IMR-90 (cell line): ENCODE measurements at regions of chr15 and their contacts with region 1.

Region 1: DNA sequence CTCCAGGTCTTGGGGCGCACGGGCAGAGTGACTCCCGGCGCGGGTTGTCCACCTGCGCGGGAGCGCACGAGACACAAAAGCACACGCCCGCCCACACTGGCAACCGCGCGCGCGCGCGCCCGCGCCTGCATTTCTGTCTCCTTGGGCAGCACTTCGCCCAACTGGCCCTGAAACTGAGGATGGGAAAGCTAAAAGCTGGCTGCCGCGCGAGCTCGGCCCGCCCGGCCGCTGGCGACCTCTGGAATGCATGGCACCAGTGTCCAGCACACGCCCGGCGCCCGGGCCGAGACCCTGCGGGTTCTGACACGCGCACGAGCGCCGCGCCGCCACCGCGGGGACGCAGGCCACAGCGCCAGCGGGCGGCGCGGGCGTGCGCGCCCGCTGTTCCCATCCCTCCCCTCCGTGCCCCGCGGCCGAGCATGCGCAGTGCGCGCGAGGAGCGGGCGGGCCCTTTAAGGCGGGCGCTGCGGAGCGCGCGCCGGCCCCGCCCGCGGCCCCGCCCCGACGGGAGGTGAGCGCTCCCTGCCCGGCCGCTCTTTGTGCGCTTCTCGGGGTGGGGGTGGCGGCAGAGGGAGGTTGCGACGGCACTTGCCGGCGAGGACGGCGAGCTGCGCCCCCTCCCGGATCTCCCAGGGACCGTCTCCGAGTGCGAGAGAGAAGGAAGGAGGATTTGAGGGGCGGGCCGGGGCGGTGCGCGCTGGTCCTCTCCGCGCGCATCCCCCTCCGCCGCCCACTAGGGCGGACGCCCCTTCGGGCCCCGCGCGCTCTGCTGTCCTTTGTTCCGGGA is 1.0 kb upstream of the MEX3B start:
- DNase-seq: peak; percentile 92
- ATAC-seq: peak; percentile 69
- H3K4me3 ChIP-seq: peak overlapping the region; percentile 56
- H3K27ac ChIP-seq: peak overlapping the region; percentile 82
- H3K4me1 ChIP-seq: peaks cover 4% of the 10 kb centered on the region; the same call in 1 of the 2 replicates
- H3K27me3 ChIP-seq: no peaks in the 10 kb centered on the region
- CTCF ChIP-seq: peak; percentile 85
- POLR2A ChIP-seq: peak; percentile 67
- RAD21 ChIP-seq: peak; percentile 77

Region 2: DNA sequence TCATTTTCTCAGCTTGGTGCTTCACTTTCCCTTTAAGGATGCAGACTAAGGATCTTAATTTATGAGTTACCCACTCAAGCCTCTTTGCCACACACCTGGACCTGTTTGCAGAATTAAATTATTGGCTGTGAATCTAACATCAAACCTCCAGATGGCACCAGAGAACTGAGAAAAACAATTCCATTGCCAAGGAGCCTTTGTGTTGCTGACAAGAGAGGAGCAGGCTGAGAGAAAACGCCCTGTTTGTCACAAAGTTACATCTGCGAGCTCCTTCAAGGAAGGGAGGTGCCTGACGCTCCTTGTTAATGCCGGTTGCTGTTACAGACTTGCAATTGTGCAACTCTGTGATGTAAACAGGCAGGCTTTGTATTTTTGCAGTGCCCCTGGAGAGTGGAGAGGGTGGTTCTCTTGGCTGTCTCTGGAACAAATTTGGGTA is 636.5 kb before region 1 on chr15:
- CTCF ChIA-PET with region 1: no interaction called
- POLR2A ChIA-PET with region 1: no interaction called
- dilution Hi-C with region 1: no loop called
- in situ Hi-C with region 1: no loop called
- intact Hi-C with region 1: loop called (anchors 2 kb)
- DNase-seq: peak; percentile 74
- ATAC-seq: peak; percentile 80
- H3K4me3 ChIP-seq: no peak overlapping the region
- H3K27ac ChIP-seq: no peak overlapping the region
- H3K4me1 ChIP-seq: no peaks in the 10 kb centered on the region
- H3K27me3 ChIP-seq: peaks cover 14% of the 10 kb centered on the region
- CTCF ChIP-seq: peak; percentile 68
- POLR2A ChIP-seq: no peak
- RAD21 ChIP-seq: peak; percentile 81

Region 3: DNA sequence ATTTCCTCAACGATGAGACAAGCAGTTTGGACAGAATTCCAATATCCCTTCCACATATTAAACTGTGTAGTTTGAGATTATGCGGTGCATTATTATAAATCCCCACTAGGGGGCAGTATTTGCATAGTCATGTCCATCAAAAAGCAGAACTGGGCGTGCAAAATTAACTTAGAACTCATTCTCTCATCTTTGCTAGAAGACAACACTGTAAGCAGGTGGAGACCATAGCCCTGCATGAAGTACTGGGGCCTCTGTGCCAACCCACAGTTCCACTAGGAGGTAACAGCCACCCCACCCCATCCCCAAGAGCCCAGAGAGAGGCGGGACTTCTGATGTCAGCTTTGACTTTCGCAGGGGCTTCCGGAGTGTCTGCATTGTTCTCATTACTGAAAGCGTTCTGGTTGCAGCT is 566.2 kb before region 1 on chr15:
- CTCF ChIA-PET with region 1: no interaction called
- POLR2A ChIA-PET with region 1: no interaction called
- dilution Hi-C with region 1: no loop called
- in situ Hi-C with region 1: loop called (anchors 10 kb)
- intact Hi-C with region 1: loop called (anchors 1 kb)
- DNase-seq: peak; percentile 69
- ATAC-seq: peak; percentile 81
- H3K4me3 ChIP-seq: no peak overlapping the region
- H3K27ac ChIP-seq: no peak overlapping the region
- H3K4me1 ChIP-seq: no peaks in the 10 kb centered on the region
- H3K27me3 ChIP-seq: no peaks in the 10 kb centered on the region
- CTCF ChIP-seq: peak; percentile 83
- POLR2A ChIP-seq: 0 out of 2 replicates have a peak, but pooled peaks have one; percentile 29
- RAD21 ChIP-seq: peak; percentile 94

Region 4: DNA sequence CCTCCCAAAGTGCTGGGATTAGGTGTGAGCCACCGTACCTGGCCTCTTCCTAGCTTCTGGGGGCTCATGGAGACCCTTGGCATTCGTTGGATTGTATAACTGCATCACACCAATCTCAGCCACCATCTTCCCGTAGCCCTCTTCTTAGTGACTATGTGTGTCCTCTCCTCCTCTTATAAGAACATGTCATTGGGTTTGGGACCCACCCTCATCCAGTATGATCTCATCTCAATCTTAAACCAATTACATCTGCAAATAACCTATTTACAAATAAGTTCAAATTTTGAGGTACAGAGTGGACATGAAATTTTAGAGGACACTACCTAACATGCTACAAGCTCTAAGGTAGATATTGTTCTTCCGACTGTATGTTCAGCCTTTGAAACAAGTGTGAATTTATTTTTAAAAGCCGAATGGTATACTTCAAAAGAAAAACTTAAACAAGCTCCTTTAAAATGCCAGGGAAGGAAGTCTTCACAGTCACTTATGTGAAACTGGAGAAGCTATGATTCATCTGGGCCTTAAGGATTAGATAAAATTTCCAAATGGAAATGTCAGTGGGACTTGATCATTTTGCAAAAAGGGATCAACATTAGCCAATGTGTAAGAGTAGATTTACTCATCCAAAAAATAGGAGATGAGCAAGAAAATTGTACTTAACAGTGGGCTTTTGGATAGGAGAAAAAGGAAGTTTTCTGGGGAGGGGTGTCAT is 226.8 kb before region 1 on chr15:
- CTCF ChIA-PET with region 1: no interaction called
- POLR2A ChIA-PET with region 1: no interaction called
- dilution Hi-C with region 1: no loop called
- in situ Hi-C with region 1: no loop called
- intact Hi-C with region 1: loop called (anchors 10 kb)
- DNase-seq: peak; percentile 66
- ATAC-seq: peak; percentile 78
- H3K4me3 ChIP-seq: no peak overlapping the region
- H3K27ac ChIP-seq: no peak overlapping the region
- H3K4me1 ChIP-seq: peaks cover 3% of the 10 kb centered on the region; the same call in 1 of the 2 replicates
- H3K27me3 ChIP-seq: 0 out of 2 replicates have a peak, but pooled peaks cover 2% of the 10 kb centered on the region
- CTCF ChIP-seq: no peak
- POLR2A ChIP-seq: no peak
- RAD21 ChIP-seq: no peak

Region 5: DNA sequence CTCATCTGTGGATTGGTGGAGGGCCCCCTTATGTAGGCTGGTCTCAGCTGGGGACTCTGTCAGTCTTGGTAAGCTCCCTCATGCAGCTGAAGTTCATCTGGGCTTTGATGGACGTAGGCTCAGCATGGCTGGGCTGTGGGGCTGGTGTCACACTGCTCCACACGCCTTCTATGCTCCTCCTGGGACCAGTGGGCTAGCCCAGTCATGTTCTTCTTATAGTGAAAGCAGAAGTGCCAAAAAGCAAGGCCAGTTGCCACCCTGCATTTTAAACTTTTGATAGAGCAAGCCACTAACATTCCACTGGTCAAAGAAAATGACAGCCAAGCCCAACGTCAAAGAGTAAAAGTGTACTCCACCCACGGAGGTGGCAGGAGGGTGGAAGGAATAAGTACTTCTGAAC is 166.5 kb before region 1 on chr15:
- CTCF ChIA-PET with region 1: no interaction called
- POLR2A ChIA-PET with region 1: no interaction called
- dilution Hi-C with region 1: no loop called
- in situ Hi-C with region 1: no loop called
- intact Hi-C with region 1: no loop called
- DNase-seq: no peak
- ATAC-seq: no peak
- H3K4me3 ChIP-seq: no peak overlapping the region
- H3K27ac ChIP-seq: no peak overlapping the region
- H3K4me1 ChIP-seq: peaks cover 2% of the 10 kb centered on the region; the same call in 1 of the 2 replicates
- H3K27me3 ChIP-seq: no peaks in the 10 kb centered on the region
- CTCF ChIP-seq: no peak
- POLR2A ChIP-seq: no peak
- RAD21 ChIP-seq: no peak

Region 6: DNA sequence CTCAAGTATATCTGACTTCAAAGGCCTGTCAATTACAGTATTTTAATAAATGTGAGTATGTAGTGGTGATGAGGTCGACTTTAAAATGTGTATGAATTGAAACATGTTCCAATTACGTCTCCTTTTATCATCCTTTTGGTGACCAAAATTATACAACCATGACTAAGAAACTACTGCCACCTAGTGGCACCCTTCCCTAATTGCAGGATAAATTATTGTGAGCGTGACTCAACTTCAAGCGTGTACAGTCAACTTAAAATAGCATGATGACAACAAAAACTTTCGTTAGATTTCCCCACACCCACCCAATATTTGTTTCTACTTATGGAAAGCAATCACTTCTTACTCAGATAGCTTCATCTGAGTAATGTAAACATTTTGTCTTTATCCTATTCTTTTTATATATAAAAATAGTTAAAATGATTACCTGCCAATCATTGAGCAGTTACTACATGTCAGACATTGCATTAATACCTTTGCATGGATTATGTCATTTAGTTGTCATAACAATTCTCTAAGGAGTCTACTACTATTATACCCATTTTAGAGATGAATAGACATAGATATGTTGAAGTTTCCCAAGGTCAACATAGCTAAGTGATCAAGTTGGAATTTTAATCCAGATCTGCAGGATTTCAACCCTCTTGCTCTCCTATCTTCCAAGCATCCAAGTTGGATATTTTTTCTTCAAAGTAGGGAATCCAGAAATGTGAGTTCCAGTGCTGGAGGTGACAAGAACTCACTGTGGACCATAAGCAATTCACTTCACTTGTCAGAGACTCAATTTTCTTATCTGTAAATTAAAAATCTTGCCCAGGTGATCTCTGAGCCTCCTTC is 107.0 kb before region 1 on chr15:
- CTCF ChIA-PET with region 1: no interaction called
- POLR2A ChIA-PET with region 1: no interaction called
- dilution Hi-C with region 1: no loop called
- in situ Hi-C with region 1: no loop called
- intact Hi-C with region 1: loop called (anchors 2 kb)
- DNase-seq: peak; percentile 81
- ATAC-seq: 0 out of 2 replicates have a peak, but pooled peaks have one; percentile 24
- H3K4me3 ChIP-seq: no peak overlapping the region
- H3K27ac ChIP-seq: peak overlapping the region; percentile 59; the same call in 1 of the 2 replicates
- H3K4me1 ChIP-seq: peaks cover 6% of the 10 kb centered on the region
- H3K27me3 ChIP-seq: no peaks in the 10 kb centered on the region
- CTCF ChIP-seq: peak; percentile 85
- POLR2A ChIP-seq: no peak
- RAD21 ChIP-seq: peak; percentile 82

Region 7: DNA sequence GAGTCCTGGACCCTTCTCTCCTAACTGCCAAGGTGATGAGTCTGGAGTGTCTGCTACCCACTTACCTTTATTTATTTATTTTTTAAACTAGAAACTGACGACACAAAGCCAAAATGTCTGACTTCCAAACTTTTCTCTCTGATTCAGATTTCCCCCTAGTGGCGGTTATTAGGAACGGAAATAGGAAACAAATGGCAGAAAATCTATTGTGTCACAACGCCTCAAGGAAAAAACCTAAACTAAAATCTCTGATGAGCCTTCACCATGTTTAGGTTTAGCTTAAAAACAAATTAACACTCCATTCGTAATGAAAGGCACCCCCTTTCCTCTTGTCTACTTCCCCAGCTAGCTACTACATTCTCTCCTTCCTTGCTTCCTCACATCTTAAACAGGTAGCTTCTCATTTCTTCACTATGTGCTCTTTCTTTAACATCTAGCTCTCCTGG is 93.0 kb after region 1 on chr15:
- CTCF ChIA-PET with region 1: no interaction called
- POLR2A ChIA-PET with region 1: no interaction called
- dilution Hi-C with region 1: no loop called
- in situ Hi-C with region 1: no loop called
- intact Hi-C with region 1: loop called (anchors 2 kb)
- DNase-seq: peak; percentile 70
- ATAC-seq: peak; percentile 71
- H3K4me3 ChIP-seq: no peak overlapping the region
- H3K27ac ChIP-seq: no peak overlapping the region
- H3K4me1 ChIP-seq: peaks cover 11% of the 10 kb centered on the region
- H3K27me3 ChIP-seq: no peaks in the 10 kb centered on the region
- CTCF ChIP-seq: peak; percentile 77
- POLR2A ChIP-seq: no peak
- RAD21 ChIP-seq: peak; percentile 65